ENCODE measurements at regions of chr1 and their contacts with region 1.

Region 1: DNA sequence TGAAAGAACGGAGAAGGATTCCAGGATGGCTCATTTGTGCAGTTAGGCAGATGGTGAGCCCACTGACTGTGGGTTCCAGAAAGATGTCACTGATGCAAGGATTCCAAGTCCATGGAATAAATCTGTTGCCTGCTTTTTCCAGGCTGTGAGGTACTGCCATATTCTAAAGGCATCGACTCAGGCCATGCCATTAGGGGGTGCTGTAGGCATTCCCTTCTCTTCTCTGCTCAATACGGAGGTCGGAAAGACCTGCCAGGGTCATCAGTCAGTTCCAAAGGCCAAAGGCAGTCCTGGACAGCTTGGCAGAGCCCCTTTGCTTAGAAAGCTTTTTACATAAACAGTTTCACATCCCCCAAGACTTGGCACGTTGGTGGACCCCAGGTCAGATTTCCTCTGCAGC is 31.7 kb upstream of the TMEM125 start:
- DNase-seq: peak; percentile 78
- H3K4me3 Mint-ChIP-seq: no peak overlapping the region
- H3K27ac Mint-ChIP-seq: no peak overlapping the region
- H3K4me1 Mint-ChIP-seq: peaks cover 31% of the 10 kb centered on the region
- H3K27me3 Mint-ChIP-seq: no peaks in the 10 kb centered on the region
- CTCF ChIP-seq: peak; percentile 57

Region 2: GRCh38 chr1:42876009-42876408 is 362.1 kb before region 1 on chr1:
- CTCF ChIA-PET with region 1: no interaction called
- intact Hi-C with region 1: no loop called
- DNase-seq: no peak
- H3K4me3 Mint-ChIP-seq: no peak overlapping the region
- H3K27ac Mint-ChIP-seq: no peak overlapping the region
- H3K4me1 Mint-ChIP-seq: no peaks in the 10 kb centered on the region
- H3K27me3 Mint-ChIP-seq: peaks cover 65% of the 10 kb centered on the region
- CTCF ChIP-seq: no peak

Region 3: DNA sequence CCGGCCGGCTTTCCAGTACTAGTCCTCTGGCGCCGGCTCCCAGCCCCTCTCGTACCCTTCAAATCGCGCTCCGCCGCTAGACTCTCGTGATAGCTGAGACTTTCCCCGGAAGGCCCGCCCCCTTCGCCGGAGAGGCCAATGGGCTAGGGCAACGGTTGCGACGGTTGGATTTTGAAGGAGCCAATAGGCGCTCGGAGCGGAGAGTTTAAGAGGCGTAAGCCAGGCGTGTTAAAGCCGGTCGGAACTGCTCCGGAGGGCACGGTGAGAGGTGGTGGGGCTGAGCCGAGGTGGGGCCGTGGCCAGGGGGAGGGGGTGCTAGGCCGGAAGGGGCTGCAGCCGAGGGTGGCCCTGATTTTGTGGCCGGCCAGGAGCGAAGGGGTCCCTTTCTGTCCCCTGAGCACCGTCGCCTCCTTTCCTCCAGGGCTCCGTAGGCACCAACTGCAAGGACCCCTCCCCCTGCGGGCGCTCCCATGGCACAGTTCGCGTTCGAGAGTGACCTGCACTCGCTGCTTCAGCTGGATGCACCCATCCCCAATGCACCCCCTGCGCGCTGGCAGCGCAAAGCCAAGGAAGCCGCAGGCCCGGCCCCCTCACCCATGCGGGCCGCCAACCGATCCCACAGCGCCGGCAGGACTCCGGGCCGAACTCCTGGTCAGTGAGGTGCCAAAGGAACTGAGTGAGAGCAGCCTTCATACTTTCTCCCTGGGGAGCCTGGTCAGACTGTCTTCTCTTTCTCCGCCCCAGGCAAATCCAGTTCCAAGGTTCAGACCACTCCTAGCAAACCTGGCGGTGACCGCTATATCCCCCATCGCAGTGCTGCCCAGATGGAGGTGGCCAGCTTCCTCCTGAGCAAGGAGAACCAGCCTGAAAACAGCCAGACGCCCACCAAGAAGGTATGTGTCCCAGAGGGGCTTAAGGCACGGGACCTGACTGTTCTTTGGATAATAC is 120.9 kb after region 1 on chr1 and contains the start of gene CDC20:
- CTCF ChIA-PET with region 1: interaction called, 8 read pairs
- intact Hi-C with region 1: loop called (anchors 5 kb)
- DNase-seq: peak; percentile 98
- H3K4me3 Mint-ChIP-seq: peak within 1 kb of the TSS; percentile 81
- H3K27ac Mint-ChIP-seq: peak within 1 kb of the TSS; percentile 88
- H3K4me1 Mint-ChIP-seq: peaks cover 33% of the 10 kb centered on the region
- H3K27me3 Mint-ChIP-seq: no peaks in the 10 kb centered on the region
- CTCF ChIP-seq: no peak
- total RNA-seq, gene CDC20: 128 and 134 TPM in 2 replicates